ENCODE measurements at regions of chr1 and their contacts with region 1.

Region 1: DNA sequence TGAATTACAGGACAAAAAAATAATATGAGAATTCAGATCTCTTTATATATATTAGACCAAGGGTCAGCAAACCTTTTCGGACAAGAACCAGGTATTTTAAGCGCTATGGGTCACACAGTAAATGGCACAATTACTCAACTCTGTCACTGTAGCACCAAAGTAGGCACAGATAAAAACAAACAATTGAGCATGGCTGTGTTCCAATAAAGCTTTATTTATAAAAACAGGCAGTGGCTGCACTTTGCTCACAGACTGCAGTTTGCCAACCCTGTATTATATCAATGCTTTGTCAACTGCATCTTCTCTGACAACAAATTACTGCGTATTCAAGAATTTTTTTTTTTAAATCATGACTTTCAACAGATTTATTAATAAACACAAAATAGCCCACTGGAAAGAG is 29.8 kb downstream of the EDEM3 start:
- DNase-seq: no peak
- ATAC-seq: no peak
- H3K4me3 Mint-ChIP-seq: no peak overlapping the region
- H3K27ac Mint-ChIP-seq: no peak overlapping the region
- H3K4me1 Mint-ChIP-seq: no peaks in the 10 kb centered on the region
- H3K27me3 Mint-ChIP-seq: no peaks in the 10 kb centered on the region
- CTCF ChIP-seq: no peak

Region 2: GRCh38 chr1:184708084-184708676 is 16.7 kb before region 1 on chr1:
- CTCF ChIA-PET with region 1: no interaction called
- POLR2A ChIA-PET with region 1: no interaction called
- intact Hi-C with region 1: no loop called
- DNase-seq: no peak
- ATAC-seq: no peak
- H3K4me3 Mint-ChIP-seq: no peak overlapping the region
- H3K27ac Mint-ChIP-seq: peak overlapping the region; percentile 1
- H3K4me1 Mint-ChIP-seq: peaks cover 4% of the 10 kb centered on the region
- H3K27me3 Mint-ChIP-seq: no peaks in the 10 kb centered on the region
- CTCF ChIP-seq: no peak

Region 3: GRCh38 chr1:184827600-184828368 is 102.9 kb after region 1 on chr1:
- CTCF ChIA-PET with region 1: no interaction called
- POLR2A ChIA-PET with region 1: interaction called, 13 read pairs
- intact Hi-C with region 1: no loop called
- DNase-seq: no peak
- ATAC-seq: no peak
- H3K4me3 Mint-ChIP-seq: no peak overlapping the region
- H3K27ac Mint-ChIP-seq: no peak overlapping the region
- H3K4me1 Mint-ChIP-seq: peaks cover 21% of the 10 kb centered on the region
- H3K27me3 Mint-ChIP-seq: no peaks in the 10 kb centered on the region
- CTCF ChIP-seq: no peak

Measured in activated B cell treated with CpG ODN at 0.5 μM for 24 hours (primary cell).